Endothelial cell of umbilical vein (primary cell): ENCODE measurements at regions of chr9 and their contacts with region 1.

Region 1: DNA sequence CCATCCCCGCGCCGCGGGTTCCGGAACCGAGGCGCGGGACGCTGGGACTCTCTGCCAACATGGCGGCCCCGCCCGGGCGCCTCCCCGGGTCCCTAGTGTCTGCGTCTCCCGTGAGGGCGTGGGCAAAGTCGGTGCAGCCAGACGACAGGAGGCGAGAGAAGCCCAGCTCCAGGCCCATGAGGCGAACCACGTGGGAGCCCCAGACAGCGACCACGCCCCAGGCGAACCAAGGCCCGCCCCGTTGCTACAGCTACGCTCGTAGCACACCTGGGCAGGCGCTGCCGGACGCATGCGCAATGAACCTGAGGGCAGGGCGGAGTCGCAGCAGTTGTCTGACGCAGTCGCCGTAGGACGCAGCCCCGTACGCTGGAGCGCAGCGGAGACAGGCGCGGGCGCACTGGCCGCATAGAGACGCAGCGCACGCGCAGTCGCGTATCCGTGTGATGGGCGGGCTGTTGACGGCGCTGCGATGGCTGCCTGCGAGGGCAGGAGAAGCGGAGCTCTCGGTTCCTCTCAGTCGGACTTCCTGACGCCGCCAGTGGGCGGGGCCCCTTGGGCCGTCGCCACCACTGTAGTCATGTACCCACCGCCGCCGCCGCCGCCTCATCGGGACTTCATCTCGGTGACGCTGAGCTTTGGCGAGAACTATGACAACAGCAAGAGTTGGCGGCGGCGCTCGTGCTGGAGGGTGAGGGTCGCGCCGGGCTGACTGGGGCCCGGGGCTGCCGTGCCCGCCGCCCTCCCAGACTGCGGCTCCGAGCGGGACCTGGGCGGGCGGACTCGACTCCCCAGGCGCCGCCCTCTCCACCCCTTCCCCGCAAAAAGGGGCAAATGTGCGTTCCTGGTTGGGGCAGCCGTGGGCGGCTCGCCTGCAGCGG is at the start of gene MAN1B1:
- DNase-seq: peak; percentile 100
- H3K4me3 ChIP-seq: peak within 1 kb of the TSS; percentile 42 to 62 (median 47)
- H3K27ac ChIP-seq: peak within 1 kb of the TSS; percentile 48
- H3K4me1 ChIP-seq: peaks cover 28% of the 10 kb centered on the region
- H3K27me3 ChIP-seq: no peaks in the 10 kb centered on the region
- CTCF ChIP-seq: no peak
- POLR2A ChIP-seq: peak; percentile 89
- total RNA-seq, gene MAN1B1: 67.7 and 75.3 TPM in 2 replicates

Region 2: GRCh38 chr9:137064027-137064879 is 22.5 kb before region 1 on chr9:
- CTCF ChIA-PET with region 1: interaction called, 12 read pairs
- POLR2A ChIA-PET with region 1: interaction called, 4 read pairs
- dilution Hi-C with region 1: no loop called
- intact Hi-C with region 1: no loop called
- DNase-seq: peak; percentile 31
- H3K4me3 ChIP-seq: no peak overlapping the region
- H3K27ac ChIP-seq: no peak overlapping the region
- H3K4me1 ChIP-seq: peaks cover under 1% of the 10 kb centered on the region
- H3K27me3 ChIP-seq: no peaks in the 10 kb centered on the region
- CTCF ChIP-seq: peak; percentile 86 to 97
- POLR2A ChIP-seq: no peak

Region 3: GRCh38 chr9:137070201-137070905 is 16.4 kb before region 1 on chr9 and contains the start of gene SAPCD2:
- CTCF ChIA-PET with region 1: interaction called, 12 read pairs
- POLR2A ChIA-PET with region 1: interaction called, 4 read pairs
- dilution Hi-C with region 1: no loop called
- intact Hi-C with region 1: no loop called
- DNase-seq: peak; percentile 84
- H3K4me3 ChIP-seq: peak within 1 kb of the TSS; percentile 37 to 49 (median 39)
- H3K27ac ChIP-seq: no peak within 1 kb of the TSS
- H3K4me1 ChIP-seq: peaks cover 11% of the 10 kb centered on the region
- H3K27me3 ChIP-seq: no peaks in the 10 kb centered on the region
- CTCF ChIP-seq: no peak
- POLR2A ChIP-seq: peak; percentile 75
- total RNA-seq, gene SAPCD2: 24.3 and 27.8 TPM in 2 replicates

Region 4: GRCh38 chr9:137114610-137115391 is 28.0 kb after region 1 on chr9 and contains the start of gene DPP7:
- CTCF ChIA-PET with region 1: no interaction called
- POLR2A ChIA-PET with region 1: no interaction called
- dilution Hi-C with region 1: no loop called
- intact Hi-C with region 1: loop called (anchors 2 kb)
- DNase-seq: peak; percentile 33
- H3K4me3 ChIP-seq: peak within 1 kb of the TSS; percentile 32 to 61 (median 53)
- H3K27ac ChIP-seq: no peak within 1 kb of the TSS
- H3K4me1 ChIP-seq: peaks cover 4% of the 10 kb centered on the region
- H3K27me3 ChIP-seq: no peaks in the 10 kb centered on the region
- CTCF ChIP-seq: no peak
- POLR2A ChIP-seq: peak; percentile 35
- total RNA-seq, gene DPP7: 118 and 149 TPM in 2 replicates

Region 5: DNA sequence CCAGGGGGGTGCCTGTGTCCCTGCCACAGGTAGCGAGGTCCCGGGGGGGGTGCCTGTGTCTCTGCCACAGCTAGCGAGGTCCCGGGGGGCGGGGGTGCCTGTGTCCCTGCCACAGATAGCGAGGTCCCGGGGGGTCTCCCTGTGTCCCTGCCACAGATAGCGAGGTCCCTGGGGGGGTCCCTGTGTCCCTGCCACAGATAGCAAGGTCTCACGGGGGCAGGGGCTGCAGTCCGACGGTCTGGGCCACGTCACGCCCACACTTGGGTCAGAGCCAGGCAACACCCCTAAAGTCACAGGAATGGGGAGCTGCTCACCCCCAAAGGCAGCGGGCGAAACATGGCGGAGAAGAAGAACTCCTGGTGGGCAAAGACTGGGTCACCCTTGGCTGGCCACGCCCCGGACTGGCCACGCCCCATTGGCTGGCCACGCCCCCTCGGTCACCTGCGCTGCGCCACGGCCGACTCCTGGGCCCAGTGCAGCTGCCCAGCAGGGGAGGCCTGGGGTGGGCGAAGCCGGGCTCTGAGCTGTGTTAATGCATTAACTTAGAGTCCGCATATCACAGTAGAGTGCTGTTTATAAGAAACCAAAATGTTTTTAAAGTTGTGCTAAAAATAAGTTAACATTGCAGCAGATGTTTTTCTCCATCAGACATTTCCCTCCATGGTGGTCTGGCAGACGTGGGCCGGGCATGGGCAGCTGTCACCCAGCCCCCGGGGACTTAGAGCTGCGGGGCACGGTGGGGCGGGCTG is 343.4 kb after region 1 on chr9:
- CTCF ChIA-PET with region 1: no interaction called
- POLR2A ChIA-PET with region 1: no interaction called
- dilution Hi-C with region 1: no loop called
- intact Hi-C with region 1: no loop called
- DNase-seq: no peak
- H3K4me3 ChIP-seq: no peak overlapping the region
- H3K27ac ChIP-seq: no peak overlapping the region
- H3K4me1 ChIP-seq: no peaks in the 10 kb centered on the region
- H3K27me3 ChIP-seq: no peaks in the 10 kb centered on the region
- CTCF ChIP-seq: no peak
- POLR2A ChIP-seq: no peak